ENCODE measurements at regions of chr7 and their contacts with region 1.

Region 1: GRCh38 chr7:18352339-18353255 is 143.0 kb upstream of the HDAC9 start:
- DNase-seq: peak; percentile 23
- H3K4me3 ChIP-seq: no peak overlapping the region
- H3K27me3 ChIP-seq: no peaks in the 10 kb centered on the region
- CTCF ChIP-seq: peak; percentile 58

Region 2: DNA sequence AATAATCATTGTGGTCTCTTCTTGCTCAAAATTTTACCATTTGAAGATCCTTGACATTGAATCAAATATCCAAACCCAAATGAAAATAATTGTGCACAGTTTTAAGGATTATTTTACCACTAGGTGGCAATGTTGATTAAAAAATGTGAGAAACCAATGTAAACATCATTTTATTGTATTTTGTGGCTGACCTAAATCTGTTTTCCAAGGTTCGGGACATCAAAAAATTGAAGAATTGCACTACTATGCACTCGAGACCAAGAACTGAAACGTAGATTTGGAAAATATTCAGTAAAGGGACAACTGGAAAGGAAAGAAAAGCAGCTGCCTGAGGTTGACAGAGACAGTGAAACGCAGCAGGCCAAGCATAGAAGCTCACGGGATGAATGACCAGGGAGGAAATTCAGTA is 671.6 kb before region 1 on chr7:
- CTCF ChIA-PET with region 1: interaction called, 39 read pairs
- POLR2A ChIA-PET with region 1: no interaction called
- DNase-seq: no peak
- H3K4me3 ChIP-seq: no peak overlapping the region
- H3K27me3 ChIP-seq: no peaks in the 10 kb centered on the region
- CTCF ChIP-seq: 0 out of 2 replicates have a peak, but pooled peaks have one; percentile 20

Region 3: GRCh38 chr7:18570890-18571478 is 218.4 kb after region 1 on chr7:
- CTCF ChIA-PET with region 1: interaction called, 110 read pairs
- POLR2A ChIA-PET with region 1: no interaction called
- DNase-seq: no peak
- H3K4me3 ChIP-seq: no peak overlapping the region
- H3K27me3 ChIP-seq: no peaks in the 10 kb centered on the region
- CTCF ChIP-seq: peak; percentile 47

Region 4: GRCh38 chr7:18583305-18583704 is 230.7 kb after region 1 on chr7:
- CTCF ChIA-PET with region 1: interaction called, 15 read pairs
- POLR2A ChIA-PET with region 1: no interaction called
- DNase-seq: peak; percentile 4
- H3K4me3 ChIP-seq: no peak overlapping the region
- H3K27me3 ChIP-seq: no peaks in the 10 kb centered on the region
- CTCF ChIP-seq: no peak

Region 5: DNA sequence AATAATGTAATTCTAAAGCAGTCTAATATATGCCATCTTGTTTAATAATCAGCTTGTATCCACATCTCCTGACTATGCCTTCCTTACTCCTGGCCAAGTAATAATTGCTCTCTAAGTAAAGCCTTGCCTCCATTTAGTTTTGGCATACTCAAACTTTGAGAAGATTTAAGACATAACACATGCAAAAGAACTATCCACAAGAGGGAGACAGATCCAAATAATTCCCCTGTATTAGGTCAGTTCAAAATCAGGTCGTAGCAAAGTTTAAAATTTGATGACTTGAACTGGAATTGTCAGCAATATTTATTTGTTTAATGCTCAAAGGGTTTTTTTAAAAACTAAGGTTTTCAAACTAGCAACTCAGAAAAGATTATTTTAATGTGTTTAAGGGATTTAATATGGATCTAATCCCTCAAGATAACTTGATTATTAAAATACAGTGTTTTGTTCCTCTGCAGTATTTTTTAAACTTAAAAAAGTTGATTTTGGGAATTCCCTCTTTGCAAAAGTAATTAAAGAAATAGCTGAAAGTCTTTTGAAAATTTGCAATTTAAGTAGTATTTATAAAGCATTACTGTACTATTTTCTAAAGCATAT is 238.2 kb after region 1 on chr7:
- CTCF ChIA-PET with region 1: interaction called, 40 read pairs
- POLR2A ChIA-PET with region 1: no interaction called
- DNase-seq: no peak
- H3K4me3 ChIP-seq: no peak overlapping the region
- H3K27me3 ChIP-seq: no peaks in the 10 kb centered on the region
- CTCF ChIP-seq: peak; percentile 63

Region 6: DNA sequence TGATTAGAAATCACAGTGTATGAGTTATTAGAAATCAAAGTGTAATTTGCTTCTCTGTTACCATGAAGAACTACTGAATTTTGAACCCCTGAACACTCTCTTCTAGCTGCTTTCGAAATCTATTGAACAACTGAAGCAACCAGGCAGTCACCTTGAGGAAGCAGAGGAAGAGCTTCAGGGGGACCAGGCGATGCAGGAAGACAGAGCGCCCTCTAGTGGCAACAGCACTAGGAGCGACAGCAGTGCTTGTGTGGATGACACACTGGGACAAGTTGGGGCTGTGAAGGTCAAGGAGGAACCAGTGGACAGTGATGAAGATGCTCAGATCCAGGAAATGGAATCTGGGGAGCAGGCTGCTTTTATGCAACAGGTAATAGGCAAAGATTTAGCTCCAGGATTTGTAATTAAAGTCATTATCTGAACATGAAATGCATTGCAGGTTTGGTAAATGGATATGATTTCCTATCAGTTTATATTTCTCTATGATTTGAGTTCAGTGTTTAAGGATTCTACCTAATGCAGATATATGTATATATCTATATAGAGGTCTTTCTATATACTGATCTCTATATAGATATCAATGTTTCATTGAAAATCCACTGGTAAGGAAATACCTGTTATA is 313.6 kb after region 1 on chr7:
- CTCF ChIA-PET with region 1: interaction called, 12 read pairs
- POLR2A ChIA-PET with region 1: no interaction called
- DNase-seq: no peak
- H3K4me3 ChIP-seq: no peak overlapping the region
- H3K27me3 ChIP-seq: no peaks in the 10 kb centered on the region
- CTCF ChIP-seq: peak; percentile 96

Measured in BJ (cell line).